ENCODE measurements at regions of chr2 and their contacts with region 1.

Region 1: GRCh38 chr2:234863043-234863934 is 88.5 kb upstream of the SH3BP4 start:
- DNase-seq: peak in 8 of 10 donors; percentile 27 to 63 (median 47)
- H3K4me3 ChIP-seq: no peak overlapping the region
- H3K27ac ChIP-seq: peak overlapping the region in 14 of 59 donors; percentile 5 to 62 (median 34)
- H3K27me3 ChIP-seq: no peaks in the 10 kb centered on the region
- CTCF ChIP-seq: no peak

Region 2: DNA sequence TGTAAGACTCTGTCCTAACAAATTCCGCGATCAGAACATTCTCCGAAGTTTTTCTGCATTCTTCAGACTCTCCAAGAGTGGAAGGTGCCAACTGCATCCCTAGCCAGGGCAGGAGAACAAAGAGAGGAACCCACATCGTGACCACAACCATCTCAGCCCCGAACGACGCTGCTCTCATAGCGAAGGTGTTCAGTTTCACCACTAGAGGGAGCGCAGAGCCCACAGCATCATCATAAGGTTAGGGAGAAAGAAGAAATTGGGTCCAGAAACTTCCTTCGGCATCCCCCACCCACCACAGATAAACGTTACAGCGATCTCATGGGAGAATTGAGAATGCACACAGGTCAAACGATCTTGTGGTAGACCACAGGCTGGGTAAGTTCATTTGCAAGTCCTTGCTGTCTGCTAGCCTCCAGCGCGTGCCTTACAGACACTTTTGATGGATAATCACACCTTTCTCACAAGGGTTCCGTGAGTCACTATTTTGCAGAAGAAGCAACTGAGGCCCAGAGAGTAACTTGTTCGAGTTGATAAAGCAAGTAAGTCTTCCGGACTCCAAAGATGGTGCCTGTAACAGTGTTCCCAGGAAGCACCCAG is 312.7 kb before region 1 on chr2:
- intact Hi-C with region 1: loop called in 1 of 2 experiments (anchors 10 kb)
- DNase-seq: peak in 8 of 10 donors; percentile 37 to 71 (median 58)
- H3K4me3 ChIP-seq: peak overlapping the region in 2 of 59 donors; percentile 8 to 20
- H3K27ac ChIP-seq: no peak overlapping the region
- H3K27me3 ChIP-seq: peaks cover 0 to 12% (median 0%) of the 10 kb centered on the region in 45 donors
- CTCF ChIP-seq: peak; percentile 57 to 99 (median 96)

Measured in dorsolateral prefrontal cortex (tissue), 120 donors.